Calu3 (cell line): ENCODE measurements at regions of chr1 and their contacts with region 1.

Region 1: GRCh38 chr1:39098546-39099250 is 72.5 kb downstream of the NDUFS5 start:
- DNase-seq: peak; percentile 78
- H3K4me3 Mint-ChIP-seq: no peak overlapping the region
- H3K27ac Mint-ChIP-seq: peak overlapping the region; percentile 60
- H3K4me1 Mint-ChIP-seq: peaks cover 25% of the 10 kb centered on the region
- H3K27me3 Mint-ChIP-seq: no peaks in the 10 kb centered on the region
- CTCF ChIP-seq: peak; percentile 75

Region 2: GRCh38 chr1:39061951-39062350 is 36.7 kb before region 1 on chr1:
- CTCF ChIA-PET with region 1: no interaction called
- intact Hi-C with region 1: no loop called
- DNase-seq: no peak
- H3K4me3 Mint-ChIP-seq: no peak overlapping the region
- H3K27ac Mint-ChIP-seq: no peak overlapping the region
- H3K4me1 Mint-ChIP-seq: no peaks in the 10 kb centered on the region
- H3K27me3 Mint-ChIP-seq: no peaks in the 10 kb centered on the region
- CTCF ChIP-seq: no peak

Region 3: DNA sequence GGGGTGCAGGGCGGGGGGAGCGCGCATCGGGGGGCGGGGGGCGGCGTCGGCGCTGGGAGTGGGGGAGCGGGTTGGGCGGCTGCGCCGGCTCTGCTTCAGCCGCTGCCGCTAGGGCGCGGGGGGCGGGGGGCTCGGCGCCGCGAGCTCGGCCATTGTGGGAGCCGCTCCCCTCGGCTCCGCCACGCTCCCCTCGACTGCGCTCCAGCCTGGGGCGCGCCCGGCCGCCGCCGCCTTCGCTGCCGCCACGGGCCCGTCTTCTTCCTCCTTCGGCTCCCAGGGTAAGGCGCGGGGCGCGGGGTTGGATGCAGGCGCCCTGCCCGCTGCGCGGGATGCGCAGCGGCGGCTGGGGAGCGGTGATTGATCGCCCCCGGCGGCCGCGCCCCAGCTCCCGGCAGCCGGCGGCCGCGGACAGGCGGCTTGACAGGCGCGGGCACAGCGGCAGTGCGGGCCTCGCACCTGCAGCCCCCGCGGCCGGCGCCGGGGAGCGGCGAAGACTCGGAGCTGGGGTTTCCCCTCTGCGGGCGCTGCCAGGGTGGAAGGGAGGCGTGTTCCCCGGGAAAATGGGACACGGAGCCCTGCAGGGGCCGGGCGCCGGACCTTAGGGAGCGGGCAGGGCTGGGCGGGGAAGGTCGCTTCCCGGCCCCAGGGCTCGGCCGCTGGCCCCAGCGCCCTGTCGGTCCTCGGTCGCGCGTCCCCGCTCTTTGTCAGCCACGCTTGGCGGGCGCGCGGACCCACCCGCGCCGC is 17.3 kb before region 1 on chr1:
- CTCF ChIA-PET with region 1: no interaction called
- intact Hi-C with region 1: no loop called
- DNase-seq: peak; percentile 26
- H3K4me3 Mint-ChIP-seq: peak overlapping the region; percentile 67
- H3K27ac Mint-ChIP-seq: no peak overlapping the region
- H3K4me1 Mint-ChIP-seq: no peaks in the 10 kb centered on the region
- H3K27me3 Mint-ChIP-seq: peaks cover 75% of the 10 kb centered on the region
- CTCF ChIP-seq: no peak

Region 4: GRCh38 chr1:39132505-39133339 is 34.0 kb after region 1 on chr1:
- CTCF ChIA-PET with region 1: interaction called, 7 read pairs
- intact Hi-C with region 1: loop called (anchors 2 kb)
- DNase-seq: peak; percentile 85
- H3K4me3 Mint-ChIP-seq: peak overlapping the region; percentile 30
- H3K27ac Mint-ChIP-seq: peak overlapping the region; percentile 79
- H3K4me1 Mint-ChIP-seq: peaks cover 50% of the 10 kb centered on the region
- H3K27me3 Mint-ChIP-seq: no peaks in the 10 kb centered on the region
- CTCF ChIP-seq: peak; percentile 38

Region 5: DNA sequence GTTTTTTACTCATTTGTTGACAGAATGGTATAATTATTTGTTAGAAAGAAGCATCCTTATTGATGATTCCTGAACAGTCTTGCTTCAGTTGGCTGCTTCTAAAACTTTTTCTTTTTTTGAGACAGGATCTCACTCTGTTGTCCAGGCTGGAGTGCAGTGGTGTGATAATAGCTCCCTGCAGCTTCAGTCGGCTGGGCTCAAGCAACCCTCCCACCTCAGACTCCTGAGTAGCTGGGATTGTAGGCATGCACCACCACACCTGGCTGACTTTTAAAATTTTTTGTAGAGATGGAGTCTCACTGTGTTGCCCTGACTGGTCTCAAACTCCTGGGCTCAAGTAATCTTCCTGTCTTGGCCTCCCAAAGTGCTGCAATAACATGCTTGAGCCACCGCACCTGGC is 144.6 kb after region 1 on chr1:
- CTCF ChIA-PET with region 1: no interaction called
- intact Hi-C with region 1: no loop called
- DNase-seq: no peak
- H3K4me3 Mint-ChIP-seq: no peak overlapping the region
- H3K27ac Mint-ChIP-seq: no peak overlapping the region
- H3K4me1 Mint-ChIP-seq: peaks cover 4% of the 10 kb centered on the region
- H3K27me3 Mint-ChIP-seq: no peaks in the 10 kb centered on the region
- CTCF ChIP-seq: no peak

Region 6: DNA sequence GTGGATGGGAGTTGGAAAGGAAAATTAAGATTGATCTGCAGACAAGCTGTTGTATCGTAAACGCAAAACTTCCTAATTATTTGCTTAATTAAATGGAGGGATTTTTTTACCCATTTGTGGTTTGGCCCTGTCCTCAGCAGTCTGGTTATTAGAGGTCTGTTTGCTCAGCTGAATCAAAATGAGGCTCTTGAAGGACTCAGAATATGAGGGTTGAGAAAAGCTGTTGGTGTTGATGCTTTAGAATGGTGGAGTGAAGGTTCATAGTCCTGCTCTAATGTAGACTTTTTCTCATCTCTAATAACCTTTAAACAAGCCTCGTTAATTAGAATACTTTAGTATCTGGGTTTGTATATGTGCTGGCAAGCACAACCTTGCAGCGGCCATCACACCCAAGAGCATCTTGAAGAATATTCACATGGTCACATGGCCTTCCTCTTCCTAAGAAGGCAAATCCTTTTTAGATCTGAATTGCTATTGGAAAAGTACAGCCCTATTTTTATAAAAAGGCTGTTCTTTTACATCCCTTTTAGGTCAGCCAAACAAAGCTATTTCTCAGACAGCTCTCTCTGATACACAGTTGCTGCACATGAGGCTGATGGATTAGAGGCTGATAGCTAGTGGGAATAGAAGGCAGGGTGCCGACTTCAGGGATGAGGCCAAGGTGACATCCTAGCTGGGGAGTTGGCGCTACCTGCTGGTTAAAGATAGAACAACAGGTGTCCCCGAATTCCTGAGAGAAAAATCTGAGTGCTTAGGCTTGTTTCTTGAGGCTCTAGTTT is 159.6 kb after region 1 on chr1:
- CTCF ChIA-PET with region 1: interaction called, 45 read pairs
- intact Hi-C with region 1: loop called (anchors 1 kb)
- DNase-seq: peak; percentile 76
- H3K4me3 Mint-ChIP-seq: no peak overlapping the region
- H3K27ac Mint-ChIP-seq: no peak overlapping the region
- H3K4me1 Mint-ChIP-seq: no peaks in the 10 kb centered on the region
- H3K27me3 Mint-ChIP-seq: no peaks in the 10 kb centered on the region
- CTCF ChIP-seq: peak; percentile 81

Region 7: GRCh38 chr1:39538588-39539465 is 440.1 kb after region 1 on chr1:
- CTCF ChIA-PET with region 1: interaction called, 6 read pairs
- intact Hi-C with region 1: loop called (anchors 2 kb)
- DNase-seq: peak; percentile 73
- H3K4me3 Mint-ChIP-seq: no peak overlapping the region
- H3K27ac Mint-ChIP-seq: peak overlapping the region; percentile 6
- H3K4me1 Mint-ChIP-seq: no peaks in the 10 kb centered on the region
- H3K27me3 Mint-ChIP-seq: no peaks in the 10 kb centered on the region
- CTCF ChIP-seq: peak; percentile 70

Region 8: DNA sequence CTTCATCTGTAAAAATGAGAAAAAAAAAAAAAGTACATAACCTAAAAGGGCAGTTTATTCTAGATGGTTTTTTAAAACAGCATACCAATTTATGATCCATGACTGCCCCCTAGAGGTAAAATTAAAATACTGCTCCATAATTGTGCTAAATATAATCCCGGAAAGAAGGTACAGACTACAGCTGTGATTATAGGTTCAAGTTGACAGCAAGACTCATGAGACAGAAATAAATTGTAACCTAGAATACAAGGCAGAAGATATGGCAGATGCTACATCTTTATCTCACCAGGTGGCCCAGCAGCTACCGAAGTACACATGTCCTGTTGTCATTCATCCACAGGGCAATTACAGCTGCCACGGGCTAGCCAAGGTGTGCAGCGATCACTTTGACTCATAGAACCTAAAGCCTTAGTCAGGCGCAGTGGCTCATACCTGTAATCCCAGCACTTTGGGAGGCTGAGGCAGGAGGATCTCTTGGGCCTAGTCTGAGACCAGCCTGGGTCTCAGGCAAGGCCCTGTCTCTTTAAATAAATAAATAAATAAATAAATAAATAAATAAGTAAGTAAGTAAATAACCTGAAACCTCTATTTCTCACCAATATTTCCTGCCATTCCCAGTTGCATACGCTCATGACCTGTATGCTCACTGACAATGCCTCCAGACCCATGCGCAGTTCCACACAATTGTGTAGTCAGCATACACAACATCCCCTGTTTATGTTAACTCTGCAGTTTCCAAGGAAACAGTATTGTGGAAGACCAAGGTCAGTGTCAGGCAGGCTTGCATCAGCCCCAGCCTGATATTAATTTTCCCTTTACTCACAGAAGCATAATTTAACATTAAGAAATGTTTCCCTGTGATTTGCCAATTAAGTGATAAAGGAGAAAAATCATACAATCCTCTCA is 621.6 kb after region 1 on chr1:
- CTCF ChIA-PET with region 1: no interaction called
- intact Hi-C with region 1: loop called (anchors 1 kb)
- DNase-seq: no peak
- H3K4me3 Mint-ChIP-seq: no peak overlapping the region
- H3K27ac Mint-ChIP-seq: no peak overlapping the region
- H3K4me1 Mint-ChIP-seq: no peaks in the 10 kb centered on the region
- H3K27me3 Mint-ChIP-seq: peaks cover 65% of the 10 kb centered on the region
- CTCF ChIP-seq: no peak